ENCODE measurements at regions of chr11 and their contacts with region 1.

Region 1: DNA sequence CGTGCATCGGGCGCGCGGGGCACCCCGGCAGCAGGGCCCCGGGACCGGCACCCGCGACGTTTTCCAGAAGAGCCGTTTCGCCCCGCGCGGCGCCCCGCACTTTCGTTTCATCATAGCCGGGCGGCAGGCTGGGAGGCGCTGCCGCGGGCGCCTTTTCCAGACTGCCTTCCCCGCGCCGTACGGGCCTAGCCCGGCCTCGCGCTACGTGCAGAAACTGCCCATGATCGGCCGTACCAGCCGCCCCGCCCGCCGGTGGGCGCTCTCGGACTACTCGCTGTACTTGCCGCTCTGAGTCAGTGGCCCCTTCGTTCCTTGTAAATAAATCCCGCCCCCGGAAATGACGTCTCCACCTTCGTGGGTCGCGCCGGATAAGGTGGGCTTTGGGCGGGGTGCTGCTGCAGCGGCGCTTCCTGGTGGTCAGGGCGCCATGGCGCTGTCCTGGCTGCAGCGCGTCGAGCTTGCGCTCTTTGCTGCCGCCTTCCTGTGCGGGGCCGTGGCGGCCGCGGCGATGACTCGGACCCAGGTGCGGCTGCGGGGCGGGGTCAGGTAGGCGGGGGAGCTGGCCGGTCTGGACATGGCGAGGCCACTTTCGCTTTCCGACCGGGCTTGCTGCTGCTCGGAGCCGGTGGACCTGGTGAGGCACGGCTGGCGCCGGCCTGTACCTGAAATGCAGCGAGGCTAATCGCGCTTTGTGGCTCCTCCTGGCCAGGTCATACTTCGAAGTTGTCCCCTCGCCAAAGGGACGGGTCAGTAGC is at the start of gene TMEM179B:
- DNase-seq: peak; percentile 93
- H3K4me3 ChIP-seq: peak within 1 kb of the TSS; percentile 89
- H3K27ac ChIP-seq: peak within 1 kb of the TSS; percentile 73
- H3K27me3 ChIP-seq: no peaks in the 10 kb centered on the region
- CTCF ChIP-seq: peak; percentile 70
- polyA plus RNA-seq, gene TMEM179B: 51.7 and 63.8 TPM in 2 replicates

Region 2: GRCh38 chr11:62726915-62727763 is 60.0 kb before region 1 on chr11 and contains the start of gene HNRNPUL2:
- CTCF ChIA-PET with region 1: interaction called, 7 read pairs
- POLR2A ChIA-PET with region 1: interaction called, 13 read pairs
- DNase-seq: peak; percentile 99
- H3K4me3 ChIP-seq: peak within 1 kb of the TSS; percentile 99
- H3K27ac ChIP-seq: peak within 1 kb of the TSS; percentile 98
- H3K27me3 ChIP-seq: no peaks in the 10 kb centered on the region
- CTCF ChIP-seq: 0 out of 2 replicates have a peak, but pooled peaks have one; percentile 11
- polyA plus RNA-seq, gene HNRNPUL2: 26.6 and 28.2 TPM in 2 replicates

Region 3: GRCh38 chr11:62771144-62772021 is 15.8 kb before region 1 on chr11 and contains the start of gene TAF6L:
- CTCF ChIA-PET with region 1: interaction called, 30 read pairs
- POLR2A ChIA-PET with region 1: interaction called, 14 read pairs
- DNase-seq: peak; percentile 89
- H3K4me3 ChIP-seq: peak within 1 kb of the TSS; percentile 77
- H3K27ac ChIP-seq: peak within 1 kb of the TSS; percentile 85
- H3K27me3 ChIP-seq: no peaks in the 10 kb centered on the region
- CTCF ChIP-seq: no peak
- polyA plus RNA-seq, gene TAF6L: 8.9 and 13.4 TPM in 2 replicates

Region 4: GRCh38 chr11:62805076-62805892 is 18.1 kb after region 1 on chr11 and contains the start of gene NXF1:
- CTCF ChIA-PET with region 1: interaction called, 21 read pairs
- POLR2A ChIA-PET with region 1: interaction called, 6 read pairs
- DNase-seq: peak; percentile 87
- H3K4me3 ChIP-seq: peak within 1 kb of the TSS; percentile 96
- H3K27ac ChIP-seq: peak within 1 kb of the TSS; percentile 81
- H3K27me3 ChIP-seq: no peaks in the 10 kb centered on the region
- CTCF ChIP-seq: peak; percentile 14; the same call in 1 of the 2 replicates
- polyA plus RNA-seq, gene NXF1: 48.9 and 66.1 TPM in 2 replicates

Region 5: DNA sequence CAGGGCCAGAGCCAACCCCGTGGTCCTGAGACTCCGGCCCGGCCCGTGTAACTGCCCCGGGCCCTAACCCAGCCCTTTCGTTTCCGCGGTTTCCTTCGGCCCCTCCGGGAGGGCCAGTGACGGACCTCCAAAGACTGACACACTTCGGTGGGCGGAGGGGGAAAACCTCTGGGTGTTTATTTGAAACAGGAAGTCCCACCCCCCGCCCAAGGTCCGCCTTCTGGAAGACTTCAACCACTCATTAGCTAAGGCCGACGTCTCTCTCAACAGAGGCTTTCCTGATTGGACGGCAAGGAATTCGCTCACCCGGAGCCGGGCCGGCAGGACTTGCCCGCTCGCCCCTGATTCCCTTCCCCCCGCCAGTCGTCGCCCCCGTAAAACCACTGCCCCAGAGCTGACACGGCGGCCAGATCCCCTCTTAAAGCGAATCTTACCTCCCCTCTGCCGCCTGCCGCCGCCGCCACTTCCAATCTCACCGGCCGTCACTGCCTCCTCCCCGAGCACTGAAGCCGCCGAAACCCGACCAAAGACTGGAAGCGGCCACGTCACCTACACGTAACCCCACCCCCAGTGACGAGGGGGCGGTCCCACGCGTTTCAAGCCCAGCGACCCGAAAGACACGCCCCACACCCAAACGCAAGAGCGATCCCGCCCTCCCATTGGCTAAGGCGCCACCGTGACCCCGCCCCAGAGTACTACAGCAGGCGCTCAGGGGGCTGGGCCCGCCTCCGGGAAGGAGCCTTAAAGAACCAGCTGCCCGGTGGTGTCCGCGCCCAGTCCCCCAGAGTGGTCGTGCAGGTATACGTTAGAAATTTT is 44.5 kb after region 1 on chr11 and contains the start of gene STX5:
- CTCF ChIA-PET with region 1: interaction called, 11 read pairs
- POLR2A ChIA-PET with region 1: interaction called, 19 read pairs
- DNase-seq: peak; percentile 97
- H3K4me3 ChIP-seq: peak within 1 kb of the TSS; percentile 85
- H3K27ac ChIP-seq: peak within 1 kb of the TSS; percentile 99
- H3K27me3 ChIP-seq: no peaks in the 10 kb centered on the region
- CTCF ChIP-seq: no peak
- polyA plus RNA-seq, gene STX5: 51.7 and 52.1 TPM in 2 replicates

Region 6: DNA sequence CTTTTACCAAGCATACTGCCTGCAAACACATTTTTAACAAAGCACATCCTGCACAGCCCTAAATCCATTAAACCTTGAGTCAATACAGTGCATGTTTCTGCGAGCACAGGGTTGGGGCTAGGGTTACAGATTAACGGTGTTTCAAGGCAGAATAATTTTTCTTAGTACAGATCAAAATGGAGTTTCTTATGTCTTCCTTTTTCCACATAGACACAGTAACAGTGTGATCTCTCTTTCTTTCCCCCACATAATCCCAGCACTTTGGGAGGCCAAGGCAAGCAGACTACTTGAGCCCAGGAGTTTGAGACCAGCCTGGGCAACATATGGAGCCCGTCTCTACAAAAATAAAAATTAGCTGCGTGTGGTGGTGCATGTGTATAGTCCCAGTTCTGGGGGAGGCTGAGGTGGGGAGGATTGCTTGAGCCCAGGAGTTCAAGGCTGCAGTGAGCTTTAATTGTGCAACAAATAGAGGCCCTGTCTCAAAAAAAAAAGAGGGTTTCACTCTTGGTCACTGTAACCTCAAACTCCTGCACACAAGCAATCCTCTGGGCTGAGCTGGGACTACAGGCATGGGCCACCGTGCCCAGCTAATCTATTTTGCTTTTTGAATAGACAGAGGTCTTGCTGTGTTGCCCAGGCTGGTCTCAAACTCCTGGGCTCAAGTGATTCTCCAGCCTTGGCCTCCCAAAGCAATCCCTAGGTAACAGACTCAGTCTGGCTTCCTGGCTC is 73.8 kb after region 1 on chr11:
- CTCF ChIA-PET with region 1: interaction called, 40 read pairs
- POLR2A ChIA-PET with region 1: interaction called, 13 read pairs
- DNase-seq: no peak
- H3K4me3 ChIP-seq: no peak overlapping the region
- H3K27ac ChIP-seq: no peak overlapping the region
- H3K27me3 ChIP-seq: no peaks in the 10 kb centered on the region
- CTCF ChIP-seq: no peak